ENCODE measurements at regions of chr1 and their contacts with region 1.

Region 1: DNA sequence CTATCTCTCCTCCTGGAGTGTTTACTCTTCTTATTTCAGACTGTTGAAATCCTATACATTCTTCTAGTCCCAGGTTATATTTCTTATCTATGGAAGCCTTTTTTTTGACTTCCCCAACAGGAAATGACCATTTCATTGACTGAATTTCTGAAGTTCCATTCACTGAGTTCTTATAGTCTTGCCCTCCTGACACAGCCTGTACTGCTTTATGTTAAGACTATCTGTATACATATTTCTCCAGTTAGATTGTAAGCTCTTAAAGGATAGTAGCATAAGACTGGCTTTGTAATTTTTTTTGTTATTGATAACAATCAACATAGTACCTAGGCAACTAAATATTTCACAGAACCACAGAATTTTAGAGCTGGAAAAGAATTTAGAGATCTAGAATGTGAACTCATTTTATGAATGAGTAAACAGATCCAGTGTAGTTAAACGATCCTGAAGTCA is 14.9 kb upstream of the MACF1 start:
- DNase-seq: no peak
- H3K4me3 Mint-ChIP-seq: no peak overlapping the region
- H3K27ac Mint-ChIP-seq: peak overlapping the region; percentile 50
- H3K4me1 Mint-ChIP-seq: peaks cover 84% of the 10 kb centered on the region
- H3K27me3 Mint-ChIP-seq: no peaks in the 10 kb centered on the region

Region 2: GRCh38 chr1:39034114-39034654 is 155.4 kb before region 1 on chr1:
- CTCF ChIA-PET with region 1: interaction called, 4 read pairs
- POLR2A ChIA-PET with region 1: no interaction called
- intact Hi-C with region 1: loop called (anchors 5 kb)
- DNase-seq: no peak
- H3K4me3 Mint-ChIP-seq: peak overlapping the region; percentile 64
- H3K27ac Mint-ChIP-seq: peak overlapping the region; percentile 80
- H3K4me1 Mint-ChIP-seq: peaks cover 39% of the 10 kb centered on the region
- H3K27me3 Mint-ChIP-seq: no peaks in the 10 kb centered on the region

Region 3: DNA sequence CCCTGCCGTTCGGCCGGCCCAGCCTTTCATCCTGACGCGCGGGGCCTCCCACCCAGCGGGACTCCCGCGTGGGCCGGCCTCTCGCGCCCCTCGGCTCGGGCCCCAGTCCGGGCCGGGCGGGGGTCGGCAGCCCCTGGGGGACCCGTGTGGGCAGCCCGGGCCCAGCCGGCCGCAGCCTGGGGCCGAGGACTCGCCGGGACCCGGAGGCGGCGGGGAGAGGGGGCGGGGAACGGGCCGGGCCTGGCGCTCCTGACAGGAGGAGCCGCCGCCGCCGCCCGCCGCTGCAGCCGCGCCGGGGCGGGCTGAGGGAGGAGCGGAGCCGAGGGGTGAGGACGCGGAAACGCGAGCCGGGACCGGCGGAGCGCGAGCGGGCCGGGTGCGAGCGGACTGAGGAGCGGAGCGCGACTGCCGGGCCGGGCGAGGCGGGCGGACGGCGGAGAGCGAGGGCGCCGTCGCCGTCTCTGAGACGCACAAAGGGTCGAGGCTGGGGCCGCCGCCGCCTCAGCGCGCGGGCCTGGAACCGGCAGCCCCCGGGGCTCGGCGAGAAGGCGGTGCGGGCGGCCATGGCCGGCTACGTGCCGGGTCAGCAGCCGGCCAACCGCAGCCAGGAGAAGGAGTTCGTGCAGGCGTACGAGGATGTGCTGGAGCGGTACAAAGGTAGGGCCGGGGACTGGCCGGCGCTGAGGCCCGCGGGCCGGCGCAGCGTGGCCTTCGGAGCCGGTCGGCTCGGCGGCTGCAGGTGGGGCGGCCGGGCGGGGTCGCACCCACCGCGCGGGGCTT is 84.4 kb before region 1 on chr1:
- CTCF ChIA-PET with region 1: interaction called, 58 read pairs
- POLR2A ChIA-PET with region 1: interaction called, 3 read pairs
- intact Hi-C with region 1: loop called (anchors 1 kb)
- DNase-seq: peak; percentile 65
- H3K4me3 Mint-ChIP-seq: peak overlapping the region; percentile 63
- H3K27ac Mint-ChIP-seq: no peak overlapping the region
- H3K4me1 Mint-ChIP-seq: peaks cover 38% of the 10 kb centered on the region
- H3K27me3 Mint-ChIP-seq: peaks cover 2% of the 10 kb centered on the region

Region 4: GRCh38 chr1:39214998-39215873 is 25.6 kb after region 1 on chr1:
- CTCF ChIA-PET with region 1: interaction called, 59 read pairs
- POLR2A ChIA-PET with region 1: interaction called, 17 read pairs
- intact Hi-C with region 1: no loop called
- DNase-seq: peak; percentile 65
- H3K4me3 Mint-ChIP-seq: peak overlapping the region; percentile 88
- H3K27ac Mint-ChIP-seq: peak overlapping the region; percentile 88
- H3K4me1 Mint-ChIP-seq: peaks cover 54% of the 10 kb centered on the region
- H3K27me3 Mint-ChIP-seq: no peaks in the 10 kb centered on the region

Region 5: DNA sequence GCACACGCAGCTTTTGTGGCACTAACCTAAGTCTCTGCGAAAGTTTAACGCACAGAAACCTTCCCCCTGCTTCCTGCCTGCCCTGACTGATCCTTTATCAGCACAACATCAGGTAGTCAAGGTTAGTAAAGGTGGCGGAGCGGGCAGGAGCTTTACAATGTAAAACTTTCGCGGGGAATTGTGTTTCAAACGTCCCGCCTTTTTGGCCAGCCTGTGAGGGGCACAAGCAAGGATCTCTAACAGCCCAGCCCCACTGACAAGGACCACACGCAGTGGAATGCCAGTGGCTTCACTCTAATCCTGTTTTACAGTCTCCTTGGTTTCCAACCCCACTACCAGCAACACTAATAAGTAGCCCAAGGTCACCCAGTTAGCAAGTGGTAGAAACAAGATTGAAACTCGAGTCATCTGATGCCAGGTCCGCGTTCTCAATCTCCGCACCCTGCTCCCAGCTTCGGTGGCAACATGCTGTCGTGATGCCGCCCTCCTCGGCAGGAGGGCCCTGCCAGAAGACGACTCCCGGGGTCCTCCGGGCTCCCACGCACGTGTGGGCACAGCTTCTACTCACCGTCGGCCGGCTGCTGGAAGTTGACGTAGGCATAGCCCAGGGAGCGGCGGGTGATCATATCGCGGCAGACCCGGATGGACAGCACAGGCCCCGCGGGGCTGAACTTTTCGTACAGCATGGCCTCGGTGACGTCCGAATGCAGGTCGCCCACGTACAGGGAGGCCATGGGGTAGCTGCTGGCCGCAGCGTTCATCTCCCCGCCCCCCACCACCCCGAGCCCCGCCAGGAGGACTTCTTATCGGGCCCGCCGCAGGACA is 385.8 kb after region 1 on chr1:
- CTCF ChIA-PET with region 1: no interaction called
- POLR2A ChIA-PET with region 1: no interaction called
- intact Hi-C with region 1: loop called (anchors 5 kb)
- DNase-seq: peak; percentile 68
- H3K4me3 Mint-ChIP-seq: peak overlapping the region; percentile 91
- H3K27ac Mint-ChIP-seq: peak overlapping the region; percentile 86
- H3K4me1 Mint-ChIP-seq: peaks cover 46% of the 10 kb centered on the region
- H3K27me3 Mint-ChIP-seq: no peaks in the 10 kb centered on the region